Head of caudate nucleus (tissue), 42 donors: ENCODE measurements at regions of chr7 and their contacts with region 1.

Region 1: GRCh38 chr7:99408379-99409191 is at the starts of genes BUD31 and PDAP1:
- DNase-seq: peak; percentile 86 to 97 (median 94)

Region 2: GRCh38 chr7:99325545-99326407 is 82.8 kb before region 1 on chr7 and contains the start of gene ARPC1A:
- intact Hi-C with region 1: loop called (anchors 5 kb)
- DNase-seq: peak; percentile 52 to 93 (median 83)

Region 3: GRCh38 chr7:99551767-99552463 is 143.3 kb after region 1 on chr7 and contains the start of gene FAM200A:
- intact Hi-C with region 1: loop called (anchors 10 kb)
- DNase-seq: peak; percentile 81 to 95 (median 92)